Common myeloid progenitor, CD34-positive (primary cell): ENCODE measurements at regions of chr19 and their contacts with region 1.

Region 1: GRCh38 chr19:3626473-3627350 is at the start of gene CACTIN:
- DNase-seq: peak; percentile 98 to 99 (median 99)
- H3K4me3 ChIP-seq: peak within 1 kb of the TSS; percentile 82 to 100 (median 94)
- H3K27ac ChIP-seq: peak within 1 kb of the TSS; percentile 87 to 92
- H3K4me1 ChIP-seq: peaks cover 5 to 23% (median 20%) of the 10 kb centered on the region in 4 experiments
- H3K27me3 ChIP-seq: no peaks in the 10 kb centered on the region

Region 2: GRCh38 chr19:3505598-3506383 is 120.9 kb before region 1 on chr19 and contains the start of gene FZR1:
- CTCF ChIA-PET with region 1: no interaction called
- POLR2A ChIA-PET with region 1: no interaction called
- DNase-seq: peak; percentile 98 to 99 (median 99)
- H3K4me3 ChIP-seq: peak within 1 kb of the TSS; percentile 52 to 96 (median 82)
- H3K27ac ChIP-seq: peak within 1 kb of the TSS; percentile 88 to 95
- H3K4me1 ChIP-seq: peaks cover 0 to 37% (median 29%) of the 10 kb centered on the region in 4 experiments
- H3K27me3 ChIP-seq: no peaks in the 10 kb centered on the region

Region 3: DNA sequence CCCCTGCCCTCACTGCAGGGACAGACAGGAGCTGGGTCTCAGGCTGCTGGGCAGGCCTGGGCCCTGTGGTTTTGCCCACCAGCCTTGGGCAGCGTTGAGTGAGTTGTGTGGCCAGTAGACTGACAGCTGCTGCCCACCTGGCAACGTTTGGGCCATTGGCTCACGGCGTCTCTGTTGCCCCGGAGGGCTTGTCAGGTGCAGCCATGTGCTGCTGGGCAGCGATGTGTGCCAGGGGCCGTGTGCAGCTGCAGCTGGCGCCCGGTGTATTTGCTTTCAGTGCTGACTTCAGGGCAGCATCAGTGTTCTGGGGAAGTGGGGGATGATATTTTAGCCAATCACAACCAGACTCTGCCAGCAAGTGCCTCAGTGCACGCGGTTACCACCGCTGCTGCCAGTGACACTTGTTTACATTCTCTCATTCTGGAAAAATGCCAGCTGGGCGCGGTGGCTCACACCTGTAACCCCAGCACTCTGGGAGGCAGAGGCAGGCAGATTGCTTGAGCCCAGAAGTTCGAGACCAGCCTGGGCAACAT is 110.0 kb before region 1 on chr19:
- CTCF ChIA-PET with region 1: no interaction called
- POLR2A ChIA-PET with region 1: no interaction called
- DNase-seq: peak in 2 of 3 donors; percentile 20 to 41
- H3K4me3 ChIP-seq: no peak overlapping the region
- H3K27ac ChIP-seq: no peak overlapping the region
- H3K4me1 ChIP-seq: peaks cover 0 to 3% (median 1%) of the 10 kb centered on the region in 4 experiments
- H3K27me3 ChIP-seq: no peaks in the 10 kb centered on the region

Region 4: GRCh38 chr19:3613818-3614661 is 12.7 kb before region 1 on chr19:
- CTCF ChIA-PET with region 1: no interaction called
- POLR2A ChIA-PET with region 1: no interaction called
- DNase-seq: no peak
- H3K4me3 ChIP-seq: no peak overlapping the region
- H3K27ac ChIP-seq: no peak overlapping the region
- H3K4me1 ChIP-seq: peaks cover 0 to 35% (median 31%) of the 10 kb centered on the region in 4 experiments
- H3K27me3 ChIP-seq: no peaks in the 10 kb centered on the region

Region 5: GRCh38 chr19:3692141-3693024 is 65.7 kb after region 1 on chr19:
- CTCF ChIA-PET with region 1: no interaction called
- POLR2A ChIA-PET with region 1: no interaction called
- DNase-seq: peak in 1 of 3 donors; percentile 40
- H3K4me3 ChIP-seq: no peak overlapping the region
- H3K27ac ChIP-seq: no peak overlapping the region
- H3K4me1 ChIP-seq: peaks cover 0 to 34% (median 19%) of the 10 kb centered on the region in 4 experiments
- H3K27me3 ChIP-seq: no peaks in the 10 kb centered on the region

Region 6: GRCh38 chr19:4115050-4115817 is 488.5 kb after region 1 on chr19:
- CTCF ChIA-PET with region 1: no interaction called
- POLR2A ChIA-PET with region 1: interaction called, 11 read pairs
- DNase-seq: no peak
- H3K4me3 ChIP-seq: no peak overlapping the region
- H3K27ac ChIP-seq: no peak overlapping the region
- H3K4me1 ChIP-seq: peaks cover 0 to 18% (median 6%) of the 10 kb centered on the region in 4 experiments
- H3K27me3 ChIP-seq: no peaks in the 10 kb centered on the region